ENCODE measurements at regions of chr17 and their contacts with region 1.

Region 1: DNA sequence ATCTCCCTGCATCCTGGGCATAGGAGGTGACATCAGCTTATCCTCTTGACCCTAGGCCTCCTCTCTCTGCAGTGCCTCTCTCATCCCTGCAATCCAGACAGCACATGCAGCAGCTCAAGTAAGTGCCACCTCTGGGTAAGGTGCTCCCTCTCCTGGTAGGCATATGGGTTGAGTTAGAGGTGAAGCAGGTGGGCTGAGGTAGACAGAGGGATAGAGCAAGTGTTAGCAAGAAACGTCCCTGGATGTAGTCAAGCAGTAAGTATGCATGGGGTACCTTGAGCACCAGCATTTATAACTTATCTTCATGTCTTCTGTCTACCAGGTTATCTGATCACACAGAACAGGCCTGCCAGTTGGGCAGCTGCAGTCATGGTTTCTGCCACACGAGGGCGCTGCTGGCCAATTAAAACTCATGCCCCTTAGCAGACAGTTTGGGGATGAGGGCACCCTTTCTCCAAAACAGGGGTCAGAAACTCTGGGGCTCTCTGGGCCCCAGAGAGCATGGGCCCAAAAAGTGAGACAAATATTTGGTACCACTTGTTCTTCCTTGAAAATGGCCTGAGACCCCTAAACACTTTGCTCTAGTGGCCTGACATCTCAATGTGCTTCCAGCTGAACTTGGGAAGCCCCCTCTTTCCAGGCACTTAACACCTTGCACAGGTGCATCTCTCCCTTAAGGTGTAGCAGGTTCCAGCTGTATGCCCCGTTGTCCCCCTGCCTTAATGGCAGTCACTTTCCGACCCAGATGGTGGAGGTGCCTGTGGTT is 59.8 kb downstream of the NEUROD2 start:
- DNase-seq: peak; percentile 73
- ATAC-seq: peak; percentile 70

Region 2: DNA sequence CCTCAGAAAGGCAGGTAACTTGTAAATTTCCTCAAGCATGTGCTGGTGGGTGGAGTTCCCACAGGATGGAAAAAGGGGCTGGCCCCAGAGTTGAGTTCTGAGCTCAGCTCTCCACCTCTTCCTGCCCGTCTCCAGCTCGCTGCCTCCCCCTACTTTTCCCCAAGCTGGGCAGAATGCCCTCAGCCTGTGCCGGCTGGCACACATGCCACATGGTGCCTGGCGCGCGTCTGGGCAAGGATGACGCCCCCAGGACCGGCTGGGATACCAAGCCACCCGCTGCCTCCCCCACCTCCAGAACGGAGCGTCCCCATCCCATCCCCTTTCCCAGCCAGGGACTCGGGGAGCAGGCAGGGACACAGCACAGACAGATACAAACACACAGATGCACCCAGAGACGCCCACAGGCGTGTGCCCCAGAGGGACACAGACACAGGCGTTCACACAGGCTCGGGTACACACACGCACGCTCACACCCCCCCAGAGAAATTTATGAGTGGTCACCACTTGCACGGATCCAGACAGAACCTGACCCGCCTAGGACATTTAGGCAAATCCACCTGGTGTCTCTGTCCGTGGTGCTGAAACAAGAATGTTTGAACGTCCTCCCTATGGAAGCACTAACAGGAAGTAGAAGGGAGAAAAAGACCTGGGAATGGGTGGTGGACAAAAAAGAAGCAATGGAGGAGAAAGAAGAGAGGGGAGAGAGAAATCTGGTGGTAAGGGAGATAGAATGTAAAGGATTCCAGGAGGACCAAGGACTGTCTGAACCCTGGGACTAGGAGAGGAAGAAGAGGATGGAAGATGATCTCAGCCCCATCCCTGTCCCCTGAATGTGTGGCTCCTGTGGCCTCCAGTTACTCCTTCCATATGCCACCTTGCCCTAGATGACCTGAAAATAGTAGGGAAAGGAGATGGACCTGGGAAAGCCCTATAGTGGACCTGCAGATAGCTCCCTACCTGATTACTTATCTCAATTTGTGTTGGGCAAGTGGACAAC is 44.4 kb after region 1 on chr17:
- intact Hi-C with region 1: loop called (anchors 1 kb)
- DNase-seq: no peak
- ATAC-seq: no peak

Region 3: GRCh38 chr17:39628655-39629493 is 81.0 kb after region 1 on chr17:
- intact Hi-C with region 1: no loop called
- DNase-seq: peak; percentile 34
- ATAC-seq: no peak

Region 4: DNA sequence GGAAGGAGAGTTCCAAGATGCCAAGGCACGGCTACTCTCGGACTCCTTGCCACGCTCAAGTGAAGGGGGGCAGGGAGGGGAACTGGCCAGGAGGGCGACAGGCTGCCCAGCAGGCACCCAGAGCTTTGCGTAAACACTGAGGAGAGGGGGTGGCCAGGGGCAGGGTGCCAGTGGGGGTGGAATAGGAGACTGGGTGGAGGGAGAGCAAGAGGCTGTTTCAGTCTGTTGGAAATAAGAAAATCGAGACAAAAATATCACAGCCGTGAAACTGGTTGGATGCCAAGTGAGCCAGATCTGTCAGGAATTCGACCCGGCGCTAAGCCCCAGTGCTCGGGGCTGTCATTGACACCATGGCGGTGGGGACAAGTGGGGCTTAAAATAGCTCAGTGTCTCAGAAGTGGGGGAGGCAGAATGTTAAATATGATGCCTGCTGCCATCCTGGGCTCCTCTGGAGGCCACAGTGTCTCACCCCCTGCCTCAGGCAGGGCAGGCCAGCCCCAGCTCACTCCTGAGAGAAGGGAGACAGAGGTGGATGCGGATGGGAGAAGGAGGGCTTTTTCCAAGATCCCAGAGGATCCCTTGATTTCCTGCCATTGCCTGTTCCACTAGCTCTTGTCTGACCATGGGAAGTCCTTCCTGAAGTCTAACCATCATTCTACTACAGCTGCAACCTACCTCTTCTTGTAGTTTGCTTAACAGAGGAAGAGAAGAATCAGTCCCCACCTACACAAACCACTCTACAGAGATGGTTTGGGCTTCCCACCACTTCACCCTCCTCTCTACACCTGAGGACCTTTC is 129.8 kb after region 1 on chr17:
- intact Hi-C with region 1: no loop called
- DNase-seq: no peak
- ATAC-seq: peak; percentile 80

Region 5: DNA sequence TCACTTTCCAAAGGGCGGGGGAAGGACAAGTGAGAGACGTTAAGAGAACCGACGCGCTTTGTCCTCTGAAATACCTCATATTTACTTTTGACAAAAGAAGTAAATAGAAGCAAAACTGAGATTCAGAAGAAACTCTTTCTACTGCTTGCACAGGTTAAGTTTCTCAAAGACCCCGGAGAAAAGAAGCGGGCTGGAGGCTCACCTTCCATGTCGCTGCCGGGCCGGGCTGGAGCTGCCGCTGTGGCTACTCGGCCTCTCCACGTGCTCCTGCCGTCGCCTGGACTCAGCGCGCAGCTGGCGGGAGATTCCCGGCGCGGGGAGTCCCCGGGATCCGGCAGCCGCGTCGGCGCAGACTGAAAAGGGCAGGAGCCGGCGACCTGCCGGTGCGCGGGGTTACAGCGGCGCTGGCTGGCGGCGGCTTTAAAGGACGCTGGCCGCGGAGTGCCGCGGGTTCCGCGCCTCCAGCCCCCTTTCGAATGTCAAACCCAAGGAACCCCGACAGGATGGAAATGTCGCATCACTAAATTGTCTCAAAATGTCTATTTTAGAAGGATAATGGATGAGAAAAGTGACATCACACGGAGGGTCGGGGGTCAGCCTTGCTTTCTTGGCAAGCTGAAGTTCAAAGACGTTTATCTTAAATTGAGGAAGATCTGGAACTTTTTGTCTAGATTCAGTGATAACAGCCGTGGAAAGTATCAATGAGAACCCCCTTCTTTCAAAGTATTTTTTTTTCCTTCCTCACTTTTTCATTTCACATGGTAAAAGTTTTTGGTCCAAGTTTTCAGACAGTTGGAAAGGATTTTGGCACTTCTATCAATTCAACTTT is 316.2 kb after region 1 on chr17 and contains the start of gene IKZF3:
- intact Hi-C with region 1: loop called (anchors 10 kb)
- DNase-seq: peak; percentile 75
- ATAC-seq: peak; percentile 65
- total RNA-seq, gene IKZF3: 0.32 TPM